ENCODE measurements at regions of chr9 and their contacts with region 1.

Region 1: GRCh38 chr9:23258569-23258968 is 567.5 kb downstream of the ELAVL2 start:
- DNase-seq: no peak
- ATAC-seq: no peak
- H3K4me3 ChIP-seq: no peak overlapping the region
- H3K27ac ChIP-seq: no peak overlapping the region
- H3K4me1 ChIP-seq: no peaks in the 10 kb centered on the region
- H3K27me3 ChIP-seq: no peaks in the 10 kb centered on the region
- CTCF ChIP-seq: no peak

Region 2: DNA sequence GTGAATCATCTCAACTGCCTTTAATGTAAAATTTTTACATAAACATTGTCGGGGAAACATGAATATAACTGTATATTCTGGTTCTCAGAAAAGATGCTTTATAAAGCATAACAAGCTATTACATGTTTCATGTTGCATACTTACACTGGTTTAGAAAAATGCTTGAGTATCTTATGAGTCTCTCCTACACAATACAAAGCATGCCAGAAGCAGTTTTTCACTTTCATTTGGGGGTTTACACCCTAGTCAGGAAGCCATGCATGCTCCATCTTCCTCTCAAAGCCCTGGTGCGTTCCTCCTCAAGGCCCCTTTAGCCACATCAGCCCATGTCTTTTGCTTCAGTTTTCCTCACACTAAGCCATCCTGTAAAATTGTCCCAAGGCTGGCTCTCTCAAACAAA is 544.6 kb after region 1 on chr9:
- intact Hi-C with region 1: loop called in 1 of 3 experiments (anchors 10 kb)
- DNase-seq: no peak
- ATAC-seq: no peak
- H3K4me3 ChIP-seq: no peak overlapping the region
- H3K27ac ChIP-seq: no peak overlapping the region
- H3K4me1 ChIP-seq: no peaks in the 10 kb centered on the region
- H3K27me3 ChIP-seq: no peaks in the 10 kb centered on the region
- CTCF ChIP-seq: no peak

Measured in pancreas (tissue), 10 donors.